Activated CD8-positive, alpha-beta T cell treated with anti-CD3 and anti-CD28 coated beads, Interleukin-2, amount 10 ng/mL, durations not matched to agents 7 days and 5 days (primary cell): ENCODE measurements at regions of chr3 and their contacts with region 1.

Region 1: DNA sequence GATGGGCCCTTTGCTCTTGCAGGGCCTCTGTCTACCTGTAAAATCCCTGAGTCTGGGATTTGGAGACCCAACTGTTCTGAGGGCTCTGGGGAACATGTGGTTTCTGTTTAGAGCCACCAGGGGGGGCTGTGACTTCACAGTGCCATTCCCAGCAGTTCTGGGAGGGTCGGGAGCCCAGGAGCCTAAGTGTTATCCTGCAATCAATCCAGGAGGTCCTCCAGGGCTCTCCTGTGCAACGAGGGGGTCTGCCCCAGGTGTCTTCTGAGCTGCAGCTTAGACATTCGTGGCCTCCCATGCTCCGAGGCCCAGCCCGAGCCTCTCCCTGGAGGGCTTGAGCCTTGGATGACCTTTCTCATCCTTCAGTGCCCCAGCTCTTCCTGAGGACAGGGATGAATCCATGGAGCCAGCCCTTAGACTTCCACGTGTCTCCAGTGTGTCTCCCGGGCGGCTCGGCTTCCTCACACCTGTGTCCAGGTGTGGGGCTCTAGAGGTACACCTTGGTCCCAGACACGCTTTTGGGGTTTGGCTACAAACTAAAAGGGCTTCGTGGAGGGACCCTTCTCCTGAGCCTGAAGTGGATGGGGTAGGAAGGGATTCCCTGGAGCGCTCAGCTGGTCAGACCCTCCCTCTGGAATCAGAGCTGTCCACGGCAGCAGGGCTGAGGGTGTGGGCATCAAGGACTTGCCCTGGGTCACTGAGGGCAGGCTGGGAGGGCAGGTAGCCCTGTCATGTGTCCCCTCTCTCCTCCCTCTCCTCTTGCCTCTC is 20.3 kb upstream of the ABTB1 start:
- DNase-seq: peak; percentile 40
- ATAC-seq: no peak
- H3K4me3 Mint-ChIP-seq: no peak overlapping the region
- H3K27ac Mint-ChIP-seq: no peak overlapping the region
- H3K4me1 Mint-ChIP-seq: no peaks in the 10 kb centered on the region
- H3K27me3 Mint-ChIP-seq: peaks cover 4% of the 10 kb centered on the region

Region 2: DNA sequence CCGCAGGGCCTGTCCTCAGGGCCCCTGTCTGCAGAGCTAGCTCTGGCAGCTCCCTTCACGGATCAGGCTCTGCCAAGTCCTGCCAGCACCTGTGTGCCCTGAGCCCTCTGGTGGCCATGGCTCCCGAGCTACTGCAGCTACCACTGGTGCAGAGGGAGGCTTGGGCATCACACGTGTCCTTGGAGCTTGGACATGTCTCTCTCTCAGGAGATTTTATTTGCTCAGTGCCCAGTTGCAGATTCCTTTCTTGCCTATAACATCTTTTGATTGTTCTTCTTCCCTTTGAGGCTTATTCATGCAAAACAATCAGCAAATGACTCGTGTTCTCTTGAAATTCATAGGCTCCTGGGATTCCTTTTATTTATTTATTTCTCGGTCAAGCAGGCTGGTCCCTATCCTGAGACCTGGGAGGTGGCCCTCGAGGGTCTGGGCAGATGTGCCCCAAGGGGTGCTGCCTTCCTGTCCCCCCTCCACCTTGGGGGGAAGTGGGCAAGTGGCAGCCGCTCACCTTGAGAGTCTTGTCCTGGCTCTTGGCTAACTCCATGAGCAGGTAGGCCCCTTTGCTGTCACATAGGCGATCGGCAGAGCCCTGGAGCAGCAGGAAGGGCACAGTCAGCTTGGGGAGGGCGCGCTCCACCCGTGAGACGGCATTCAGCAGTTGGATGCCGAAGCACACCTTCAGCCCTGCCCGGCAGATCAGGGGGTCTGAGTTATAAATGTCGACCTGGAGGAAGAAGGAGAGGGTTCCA is 42.2 kb after region 1 on chr3:
- CTCF ChIA-PET with region 1: interaction called, 10 read pairs
- POLR2A ChIA-PET with region 1: no interaction called
- DNase-seq: peak; percentile 64
- ATAC-seq: peak; percentile 58
- H3K4me3 Mint-ChIP-seq: no peak overlapping the region
- H3K27ac Mint-ChIP-seq: no peak overlapping the region
- H3K4me1 Mint-ChIP-seq: peaks cover 7% of the 10 kb centered on the region
- H3K27me3 Mint-ChIP-seq: no peaks in the 10 kb centered on the region